Adrenal gland (tissue), 19 donors: ENCODE measurements at regions of chr22 and their contacts with region 1.

Region 1: DNA sequence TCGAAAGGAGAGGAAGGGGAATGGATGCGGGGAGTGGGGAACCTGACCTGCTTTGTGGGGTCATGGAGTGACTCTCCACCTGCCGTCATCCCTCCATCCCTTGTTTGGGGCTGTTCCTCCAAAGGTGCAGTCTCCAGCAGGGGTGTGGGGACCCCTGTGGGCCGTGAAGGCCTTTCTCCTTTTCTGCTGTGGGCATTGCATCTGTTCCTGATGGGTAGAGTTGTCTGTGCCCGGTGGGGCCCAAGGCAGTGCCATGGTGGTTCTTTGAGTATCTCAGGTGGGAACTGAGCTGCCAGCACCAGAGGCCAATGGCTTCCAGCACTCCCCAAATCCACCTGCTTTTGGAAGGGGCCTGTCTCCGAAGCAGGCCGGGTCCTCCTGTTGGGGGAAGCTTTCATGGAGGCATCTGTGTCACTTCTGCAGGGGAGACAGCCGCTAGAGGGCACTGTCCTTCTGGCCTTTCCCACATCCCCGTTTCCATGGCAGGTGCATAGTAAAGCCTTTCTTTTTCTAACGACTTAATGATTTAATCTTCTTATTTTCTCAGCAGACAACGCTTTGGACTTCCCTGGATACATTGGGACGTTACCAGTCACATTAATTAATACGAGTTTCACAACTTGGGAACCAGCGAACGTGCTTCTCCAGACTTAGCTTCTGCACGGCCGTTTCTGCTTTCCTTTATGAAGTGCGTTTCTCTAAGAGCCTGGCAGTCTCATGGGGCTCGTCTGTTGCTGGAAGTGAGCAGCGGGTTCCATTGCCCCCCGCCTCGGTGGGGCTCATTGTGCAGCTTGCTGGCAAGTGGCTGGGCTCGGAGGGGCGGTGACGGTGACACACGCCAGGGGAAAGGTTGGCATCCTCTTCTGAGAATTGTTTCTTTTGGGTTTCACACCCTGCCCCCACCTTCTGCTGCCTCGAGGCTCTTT is 57.1 kb downstream of the PARVB start:
- DNase-seq: peak; percentile 57 to 93 (median 81)
- H3K4me3 ChIP-seq: no peak overlapping the region
- H3K27ac ChIP-seq: no peak overlapping the region
- H3K4me1 ChIP-seq: peaks cover 10% of the 10 kb centered on the region in 2 donors
- H3K27me3 ChIP-seq: no peaks in the 10 kb centered on the region
- CTCF ChIP-seq: peak; percentile 63 to 92 (median 75)
- POLR2A ChIP-seq: no peak

Region 2: GRCh38 chr22:42388130-42388797 is 1692.9 kb before region 1 on chr22:
- intact Hi-C with region 1: no loop called
- DNase-seq: peak in 2 of 7 donors; percentile 42 to 87
- H3K4me3 ChIP-seq: no peak overlapping the region
- H3K27ac ChIP-seq: no peak overlapping the region
- H3K4me1 ChIP-seq: no peaks in the 10 kb centered on the region
- H3K27me3 ChIP-seq: no peaks in the 10 kb centered on the region
- CTCF ChIP-seq: no peak
- POLR2A ChIP-seq: no peak

Region 3: DNA sequence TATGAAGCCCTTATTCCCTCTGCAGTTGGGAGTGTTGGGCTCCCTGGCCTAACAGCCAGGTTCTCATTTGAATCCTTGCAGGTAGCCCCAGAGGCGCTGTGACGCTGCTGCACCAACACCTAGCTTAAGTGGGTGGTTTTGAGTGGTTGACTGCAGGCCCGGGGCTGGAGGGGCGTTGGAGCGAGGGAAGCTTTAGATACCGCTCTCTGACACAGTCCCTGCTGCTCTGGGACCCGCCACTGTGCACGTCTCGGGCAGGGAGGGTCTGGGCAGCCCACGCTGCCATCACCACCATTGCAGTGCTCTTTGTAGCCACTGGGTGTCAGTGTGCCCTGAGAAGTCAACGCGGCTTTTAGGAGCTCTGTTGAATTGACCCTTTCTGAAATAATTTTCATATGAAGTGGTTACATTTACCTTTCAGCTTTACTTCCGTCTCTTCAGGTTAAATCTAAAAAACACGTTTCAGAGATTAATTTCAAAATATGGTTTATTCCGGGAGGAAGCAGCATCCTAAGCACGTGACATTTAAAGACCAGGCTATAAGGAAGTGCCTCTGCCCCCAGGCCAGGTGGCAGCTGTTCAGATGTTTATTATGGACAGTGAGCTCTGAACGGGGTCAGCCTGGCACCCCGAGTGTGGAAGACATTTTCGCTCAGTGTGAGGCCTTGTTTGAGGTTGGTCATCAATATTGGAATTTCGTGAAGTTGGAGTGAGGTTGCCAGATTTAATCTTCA is 88.0 kb before region 1 on chr22:
- intact Hi-C with region 1: loop called (anchors 5 kb)
- DNase-seq: peak; percentile 57 to 78 (median 63)
- H3K4me3 ChIP-seq: no peak overlapping the region
- H3K27ac ChIP-seq: no peak overlapping the region
- H3K4me1 ChIP-seq: peaks cover 0 to 15% of the 10 kb centered on the region in 2 donors
- H3K27me3 ChIP-seq: no peaks in the 10 kb centered on the region
- CTCF ChIP-seq: peak; percentile 89 to 98 (median 93)
- POLR2A ChIP-seq: no peak

Region 4: DNA sequence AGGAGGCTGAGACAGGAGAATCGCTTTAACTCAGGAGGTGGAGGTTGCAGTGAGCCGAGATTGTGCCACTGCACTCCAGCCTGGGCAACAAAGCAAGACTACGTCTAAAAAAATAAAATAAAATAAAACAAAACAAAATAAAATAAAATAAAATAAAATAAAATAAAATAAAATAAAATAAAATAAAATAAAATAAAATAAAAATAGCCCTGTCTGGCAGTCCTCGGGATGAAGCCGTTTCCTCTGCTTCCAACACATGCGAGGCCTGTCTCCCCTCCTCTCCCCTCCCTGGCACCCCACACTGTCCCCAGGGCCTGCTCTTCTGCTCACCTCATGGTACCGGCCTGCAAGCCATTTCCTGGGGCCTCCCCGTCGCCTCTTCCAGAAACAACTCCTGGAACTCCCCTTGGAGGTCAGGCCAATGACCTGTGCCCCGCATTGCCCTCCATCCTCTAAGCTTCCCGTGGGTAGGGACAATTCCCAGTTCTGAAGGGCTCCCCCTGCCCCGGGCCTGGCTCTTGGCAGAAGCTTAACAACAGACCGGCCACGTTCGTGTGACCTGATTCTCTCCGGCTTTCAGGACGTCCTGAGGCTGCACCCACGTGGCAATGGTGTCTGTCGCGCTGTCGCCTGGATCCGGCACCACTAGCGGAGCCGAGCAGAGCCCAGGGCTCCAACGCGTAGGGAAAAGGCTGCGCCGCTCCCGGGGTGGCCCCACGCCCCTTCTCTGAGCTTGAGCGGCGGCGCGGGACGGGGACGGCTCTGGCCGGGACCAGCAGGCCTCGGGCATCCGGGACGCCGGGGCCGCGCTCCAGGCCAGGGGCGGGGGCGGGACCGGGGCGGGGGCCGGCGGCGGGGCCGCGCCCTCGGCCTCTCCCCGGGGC is 57.6 kb before region 1 on chr22:
- intact Hi-C with region 1: loop called in 1 of 2 experiments (anchors 5 kb)
- DNase-seq: peak; percentile 48 to 69 (median 59)
- H3K4me3 ChIP-seq: peak overlapping the region in 2 of 4 donors; percentile 19 to 91
- H3K27ac ChIP-seq: peak overlapping the region; percentile 69 to 96 (median 81)
- H3K4me1 ChIP-seq: peaks cover 3 to 13% of the 10 kb centered on the region in 2 donors
- H3K27me3 ChIP-seq: no peaks in the 10 kb centered on the region
- CTCF ChIP-seq: no peak
- POLR2A ChIP-seq: peak in 1 of 2 donors; percentile 18

Region 5: GRCh38 chr22:44147821-44148574 is 66.8 kb after region 1 on chr22:
- intact Hi-C with region 1: no loop called
- DNase-seq: no peak
- H3K4me3 ChIP-seq: no peak overlapping the region
- H3K27ac ChIP-seq: no peak overlapping the region
- H3K4me1 ChIP-seq: no peaks in the 10 kb centered on the region
- H3K27me3 ChIP-seq: no peaks in the 10 kb centered on the region
- CTCF ChIP-seq: no peak
- POLR2A ChIP-seq: no peak

Region 6: DNA sequence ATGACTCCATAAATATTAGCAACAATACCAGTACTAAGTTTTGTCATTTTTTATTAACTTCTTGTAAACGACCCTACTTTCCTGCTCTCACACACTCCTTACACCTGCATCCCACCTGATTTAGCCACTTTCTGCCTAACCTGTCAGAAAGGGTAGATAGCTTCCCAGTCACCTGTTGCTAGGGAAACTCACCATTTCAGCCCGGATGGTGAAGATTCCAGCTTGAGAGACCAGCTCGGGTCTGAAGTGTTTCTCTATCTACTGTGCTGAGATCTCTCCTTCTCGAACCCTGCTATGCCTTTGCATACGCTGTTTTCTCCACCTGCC is 99.5 kb after region 1 on chr22 and contains the start of gene PARVG:
- intact Hi-C with region 1: no loop called
- DNase-seq: no peak
- H3K4me3 ChIP-seq: peak within 1 kb of the TSS in 1 of 4 donors; percentile 36
- H3K27ac ChIP-seq: peak within 1 kb of the TSS in 3 of 5 donors; percentile 13 to 83 (median 65)
- H3K4me1 ChIP-seq: no peaks in the 10 kb centered on the region
- H3K27me3 ChIP-seq: no peaks in the 10 kb centered on the region
- CTCF ChIP-seq: no peak
- POLR2A ChIP-seq: no peak
- total RNA-seq, gene PARVG: 1.4 to 48.6 (median 15.3) TPM

Region 7: DNA sequence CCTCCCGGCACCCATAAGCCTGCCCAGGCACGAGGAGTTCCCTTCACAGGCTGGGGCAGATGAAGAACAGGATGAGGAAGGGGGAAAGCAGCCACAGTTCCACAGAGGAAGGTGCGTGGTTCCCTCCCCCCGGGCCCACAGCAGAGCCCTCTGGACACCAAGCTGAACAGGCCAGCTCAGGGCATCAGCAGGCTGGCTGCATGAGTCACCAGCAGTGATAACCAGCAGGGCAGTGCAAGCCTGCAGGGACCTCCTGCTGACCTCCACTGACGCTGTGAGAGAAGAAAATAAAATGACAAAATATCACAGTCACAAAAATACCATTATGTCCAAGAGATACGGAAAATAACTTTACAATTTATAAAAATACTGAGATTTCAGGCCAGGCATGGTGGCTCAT is 405.3 kb after region 1 on chr22:
- intact Hi-C with region 1: no loop called
- DNase-seq: peak; percentile 63 to 92 (median 85)
- H3K4me3 ChIP-seq: no peak overlapping the region
- H3K27ac ChIP-seq: peak overlapping the region in 3 of 5 donors; percentile 43 to 52 (median 47)
- H3K4me1 ChIP-seq: peaks cover 0 to 7% of the 10 kb centered on the region in 2 donors
- H3K27me3 ChIP-seq: no peaks in the 10 kb centered on the region
- CTCF ChIP-seq: no peak
- POLR2A ChIP-seq: no peak